ENCODE measurements at regions of chr1 and their contacts with region 1.

Region 1: DNA sequence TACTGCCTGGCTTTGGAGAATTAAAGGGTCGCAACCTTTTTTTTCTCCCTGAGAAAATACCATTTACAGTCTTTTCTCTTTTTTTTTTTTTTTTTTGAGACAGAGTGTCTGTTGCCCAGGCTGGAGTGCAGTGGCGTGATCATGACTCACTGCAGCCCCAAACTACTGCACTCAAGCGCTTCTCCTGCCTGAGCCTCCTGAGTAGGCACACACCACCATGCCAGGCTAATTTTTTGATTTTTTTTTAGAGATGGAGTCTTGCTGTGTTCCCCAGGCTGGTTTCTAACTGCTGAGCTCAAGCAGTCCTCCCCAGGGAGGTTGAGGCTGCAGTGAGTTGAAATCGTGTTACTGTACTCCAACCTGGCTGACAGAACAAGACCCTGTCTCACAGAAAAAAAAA is 24.6 kb downstream of the UBE4B start:
- DNase-seq: peak in 7 of 10 donors; percentile 45 to 76 (median 55)
- H3K4me3 ChIP-seq: peak overlapping the region in 1 of 59 donors; percentile 8
- H3K27ac ChIP-seq: peak overlapping the region in 54 of 59 donors; percentile 22 to 94 (median 73)
- H3K27me3 ChIP-seq: no peaks in the 10 kb centered on the region
- CTCF ChIP-seq: no peak

Region 2: DNA sequence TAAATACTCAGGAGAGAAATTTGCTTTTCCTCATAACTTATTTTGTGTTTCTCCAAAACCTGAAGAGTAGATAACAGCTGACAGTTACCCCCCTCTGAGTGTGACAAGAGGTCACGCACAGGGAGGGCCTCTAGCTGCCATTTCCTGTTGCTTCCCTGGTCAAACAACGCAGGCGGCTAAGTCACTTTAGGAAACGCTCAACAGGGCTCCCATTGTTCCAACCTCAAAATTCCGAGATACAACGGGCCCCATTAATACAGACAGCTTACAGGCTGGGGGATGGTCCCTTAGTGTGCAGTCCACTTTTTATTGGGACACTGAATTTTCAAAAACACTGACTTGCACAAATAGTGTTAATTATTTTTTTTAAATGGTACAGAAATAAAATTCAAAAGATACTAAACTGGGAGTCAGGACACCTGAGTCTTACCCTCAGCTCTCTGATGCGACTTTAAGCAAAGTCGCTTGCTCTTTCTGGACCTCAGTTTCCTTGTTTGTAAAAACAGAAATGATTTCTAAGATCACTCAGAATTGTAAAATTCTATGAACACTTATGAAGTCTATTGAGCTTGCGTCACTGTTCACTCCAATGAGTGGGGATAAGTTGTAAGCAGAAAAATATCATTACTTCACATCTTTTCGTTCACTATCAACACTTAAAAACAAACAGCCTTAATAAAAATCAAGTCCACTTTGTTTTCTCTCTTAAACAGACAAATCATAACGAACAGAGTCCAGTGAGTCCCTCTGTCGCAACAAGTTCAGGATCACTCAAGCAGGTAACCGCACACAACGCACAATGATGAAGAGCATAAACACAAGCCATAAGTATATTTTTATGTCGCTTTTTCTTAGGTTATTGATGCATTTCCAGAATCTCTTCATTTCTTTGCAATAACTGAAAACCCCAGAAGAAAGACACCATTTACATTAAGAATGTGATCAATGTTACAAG is 127.6 kb before region 1 on chr1:
- intact Hi-C with region 1: no loop called
- DNase-seq: peak in 7 of 10 donors; percentile 50 to 79 (median 62)
- H3K4me3 ChIP-seq: peak overlapping the region in 7 of 59 donors; percentile 1 to 28 (median 15)
- H3K27ac ChIP-seq: peak overlapping the region; percentile 12 to 95 (median 87)
- H3K27me3 ChIP-seq: no peaks in the 10 kb centered on the region
- CTCF ChIP-seq: peak in 17 of 56 donors; percentile 11 to 51 (median 31)

Region 3: GRCh38 chr1:10085061-10085460 is 27.7 kb after region 1 on chr1:
- intact Hi-C with region 1: no loop called
- DNase-seq: no peak
- H3K4me3 ChIP-seq: no peak overlapping the region
- H3K27ac ChIP-seq: peak overlapping the region in 35 of 59 donors; percentile 2 to 81 (median 32)
- H3K27me3 ChIP-seq: no peaks in the 10 kb centered on the region
- CTCF ChIP-seq: no peak

Region 4: DNA sequence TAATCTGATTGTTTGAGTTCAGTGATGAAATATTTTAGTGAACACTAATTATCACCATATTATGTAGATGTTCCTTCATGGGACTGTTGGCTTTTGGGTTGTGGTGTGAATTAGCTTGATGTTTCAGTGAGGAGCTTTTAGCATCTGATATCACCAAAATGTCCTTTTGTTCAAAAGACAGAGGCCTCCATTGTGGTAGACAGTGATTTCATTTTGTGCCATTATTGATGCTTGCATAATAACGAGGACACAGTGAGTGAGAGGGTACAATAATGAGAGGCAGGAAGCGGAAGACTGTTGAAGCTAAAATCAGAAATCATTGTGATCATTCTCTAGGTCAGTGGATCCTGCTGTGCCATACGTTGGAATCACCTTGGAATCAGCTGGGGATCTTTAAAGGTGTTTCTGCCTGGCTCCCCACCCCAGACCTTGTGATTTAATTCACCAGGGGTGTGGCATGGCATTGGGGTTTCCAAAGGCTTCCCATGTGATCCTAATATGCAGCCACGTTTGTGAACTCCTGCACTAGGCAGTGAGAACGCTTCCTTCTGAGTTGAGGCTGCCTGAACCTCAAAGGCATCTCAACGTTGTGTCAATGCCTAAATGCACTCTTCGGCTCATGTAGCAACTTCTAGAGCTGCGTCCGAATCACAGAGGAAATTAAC is 70.9 kb after region 1 on chr1:
- intact Hi-C with region 1: loop called in 1 of 2 experiments (anchors 5 kb)
- DNase-seq: peak in 2 of 10 donors; percentile 40 to 53
- H3K4me3 ChIP-seq: peak overlapping the region in 5 of 59 donors; percentile 1 to 39 (median 3)
- H3K27ac ChIP-seq: peak overlapping the region; percentile 31 to 99 (median 94)
- H3K27me3 ChIP-seq: no peaks in the 10 kb centered on the region
- CTCF ChIP-seq: peak in 3 of 56 donors; percentile 7 to 18 (median 11)

Region 5: GRCh38 chr1:10374442-10374860 is 317.1 kb after region 1 on chr1:
- intact Hi-C with region 1: no loop called
- DNase-seq: no peak
- H3K4me3 ChIP-seq: no peak overlapping the region
- H3K27ac ChIP-seq: peak overlapping the region in 50 of 59 donors; percentile 1 to 83 (median 60)
- H3K27me3 ChIP-seq: no peaks in the 10 kb centered on the region
- CTCF ChIP-seq: no peak